Activated B cell treated with CpG ODN at 0.5 μM for 24 hours (primary cell): ENCODE measurements at regions of chr3 and their contacts with region 1.

Region 1: GRCh38 chr3:160565442-160566403 is at the start of gene KPNA4:
- DNase-seq: peak; percentile 95
- ATAC-seq: peak; percentile 88
- H3K4me3 Mint-ChIP-seq: peak within 1 kb of the TSS; percentile 95
- H3K27ac Mint-ChIP-seq: peak within 1 kb of the TSS; percentile 94
- H3K4me1 Mint-ChIP-seq: peaks cover 53% of the 10 kb centered on the region
- H3K27me3 Mint-ChIP-seq: no peaks in the 10 kb centered on the region
- CTCF ChIP-seq: no peak
- total RNA-seq, gene KPNA4: 43.4 and 46.7 TPM in 2 replicates

Region 2: DNA sequence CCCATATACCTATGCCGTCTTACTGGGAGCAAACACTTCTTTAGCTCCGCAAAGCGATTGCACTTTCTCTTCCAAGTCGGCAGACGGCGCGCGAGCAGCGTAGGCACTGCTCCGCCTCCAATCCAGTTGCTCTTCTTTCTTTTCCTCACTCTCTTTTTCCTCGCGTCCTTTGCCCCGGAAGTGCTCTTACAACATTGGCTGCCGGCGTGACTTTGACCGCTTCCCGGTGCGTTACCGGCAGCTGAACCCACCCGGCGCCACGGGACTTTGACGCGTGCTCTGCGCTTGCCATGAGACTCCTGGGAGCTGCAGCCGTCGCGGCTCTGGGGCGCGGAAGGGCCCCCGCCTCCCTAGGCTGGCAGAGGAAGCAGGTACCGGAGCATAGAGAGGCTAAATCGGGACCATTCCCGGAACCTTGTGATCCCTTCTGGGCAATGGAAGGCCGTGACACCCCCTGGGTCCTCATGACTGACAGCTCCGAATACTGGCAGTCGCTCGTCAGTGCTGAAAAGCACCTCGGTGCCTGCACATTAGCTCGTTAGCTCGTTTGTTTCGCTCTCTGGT is 1921.3 kb before region 1 on chr3 and contains the start of gene GFM1:
- CTCF ChIA-PET with region 1: no interaction called
- POLR2A ChIA-PET with region 1: no interaction called
- intact Hi-C with region 1: loop called (anchors 10 kb)
- DNase-seq: peak; percentile 75
- ATAC-seq: peak; percentile 96
- H3K4me3 Mint-ChIP-seq: peak within 1 kb of the TSS; percentile 99
- H3K27ac Mint-ChIP-seq: peak within 1 kb of the TSS; percentile 90
- H3K4me1 Mint-ChIP-seq: peaks cover 24% of the 10 kb centered on the region
- H3K27me3 Mint-ChIP-seq: no peaks in the 10 kb centered on the region
- CTCF ChIP-seq: peak; percentile 46
- total RNA-seq, gene GFM1: 46.8 and 56.4 TPM in 2 replicates

Region 3: GRCh38 chr3:160012108-160012507 is 553.6 kb before region 1 on chr3:
- CTCF ChIA-PET with region 1: no interaction called
- POLR2A ChIA-PET with region 1: no interaction called
- intact Hi-C with region 1: loop called (anchors 1 kb)
- DNase-seq: no peak
- ATAC-seq: peak; percentile 88
- H3K4me3 Mint-ChIP-seq: peak overlapping the region; percentile 25
- H3K27ac Mint-ChIP-seq: peak overlapping the region; percentile 83
- H3K4me1 Mint-ChIP-seq: peaks cover 42% of the 10 kb centered on the region
- H3K27me3 Mint-ChIP-seq: no peaks in the 10 kb centered on the region
- CTCF ChIP-seq: no peak

Region 4: DNA sequence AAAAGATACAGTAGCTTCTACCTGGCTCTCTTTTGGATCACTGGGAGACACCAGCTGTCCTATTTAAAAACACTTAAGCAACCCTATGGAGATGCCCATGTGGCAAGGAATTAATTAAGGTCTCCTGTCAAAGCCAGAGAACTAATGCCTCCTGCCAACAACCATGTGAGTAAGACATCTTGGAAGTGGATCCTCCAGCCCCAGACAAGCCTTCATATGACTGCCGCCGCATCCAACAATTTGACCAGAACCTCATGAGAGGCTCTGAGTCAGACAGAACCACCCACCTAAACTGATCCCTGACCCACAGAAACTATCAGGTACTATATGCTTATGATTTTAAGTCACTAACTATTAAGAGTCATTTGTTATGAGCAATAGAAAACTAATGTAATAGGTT is 189.0 kb before region 1 on chr3:
- CTCF ChIA-PET with region 1: no interaction called
- POLR2A ChIA-PET with region 1: no interaction called
- intact Hi-C with region 1: no loop called
- DNase-seq: no peak
- ATAC-seq: no peak
- H3K4me3 Mint-ChIP-seq: no peak overlapping the region
- H3K27ac Mint-ChIP-seq: no peak overlapping the region
- H3K4me1 Mint-ChIP-seq: no peaks in the 10 kb centered on the region
- H3K27me3 Mint-ChIP-seq: no peaks in the 10 kb centered on the region
- CTCF ChIP-seq: no peak

Region 5: DNA sequence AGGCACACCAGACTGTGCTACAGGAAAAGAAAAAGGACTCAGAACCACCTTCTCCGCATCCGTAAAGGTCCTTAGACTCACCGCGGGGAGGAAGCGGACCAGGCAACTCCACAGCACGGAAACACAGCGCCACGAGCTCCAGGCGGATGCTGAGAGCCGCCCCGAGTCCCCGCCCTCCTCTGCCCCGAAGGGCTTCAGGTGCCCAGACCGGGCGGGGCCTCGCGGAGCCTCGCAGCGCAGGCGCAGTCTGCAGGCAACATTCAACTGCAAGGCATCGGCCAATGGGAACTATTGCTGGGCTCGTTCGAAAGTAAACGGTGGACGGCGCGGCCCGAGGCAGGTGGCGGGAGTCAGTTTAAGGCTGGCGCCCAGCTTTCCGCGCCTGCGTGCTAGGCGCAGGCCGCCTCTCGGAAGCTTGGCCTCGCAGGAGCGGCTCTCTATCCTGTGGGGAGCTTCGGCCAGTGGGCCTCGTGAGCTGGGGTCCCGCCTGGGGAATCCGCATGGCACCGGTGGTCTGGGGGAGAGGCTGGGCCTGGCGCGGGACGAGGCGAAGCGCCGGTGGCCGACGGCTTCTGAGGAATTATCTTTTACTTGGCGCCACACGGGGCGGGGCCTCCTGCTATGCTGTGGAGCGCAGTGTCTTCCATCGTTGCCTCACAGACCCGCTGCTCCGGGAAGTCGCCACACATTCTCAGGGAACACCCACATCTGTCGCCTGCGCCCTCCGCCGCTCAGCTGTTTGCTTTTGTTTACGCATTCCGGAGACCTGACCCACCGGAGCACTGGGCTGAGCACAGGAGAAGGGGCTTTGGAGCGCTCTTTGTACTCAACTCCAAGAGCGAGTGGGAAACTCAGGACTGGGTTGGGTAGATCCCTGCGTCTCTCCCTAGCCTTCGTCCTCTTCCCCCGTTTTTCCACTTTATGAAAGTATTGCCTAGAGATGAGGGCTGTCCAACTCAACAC is 115.8 kb before region 1 on chr3 and contains the start of gene TRIM59:
- CTCF ChIA-PET with region 1: no interaction called
- POLR2A ChIA-PET with region 1: interaction called, 6 read pairs
- intact Hi-C with region 1: loop called (anchors 1 kb)
- DNase-seq: peak; percentile 92
- ATAC-seq: peak; percentile 96
- H3K4me3 Mint-ChIP-seq: peak within 1 kb of the TSS; percentile 94
- H3K27ac Mint-ChIP-seq: peak within 1 kb of the TSS; percentile 90
- H3K4me1 Mint-ChIP-seq: peaks cover 33% of the 10 kb centered on the region
- H3K27me3 Mint-ChIP-seq: no peaks in the 10 kb centered on the region
- CTCF ChIP-seq: no peak
- total RNA-seq, gene TRIM59: 23.4 TPM in 2 replicates

Region 6: DNA sequence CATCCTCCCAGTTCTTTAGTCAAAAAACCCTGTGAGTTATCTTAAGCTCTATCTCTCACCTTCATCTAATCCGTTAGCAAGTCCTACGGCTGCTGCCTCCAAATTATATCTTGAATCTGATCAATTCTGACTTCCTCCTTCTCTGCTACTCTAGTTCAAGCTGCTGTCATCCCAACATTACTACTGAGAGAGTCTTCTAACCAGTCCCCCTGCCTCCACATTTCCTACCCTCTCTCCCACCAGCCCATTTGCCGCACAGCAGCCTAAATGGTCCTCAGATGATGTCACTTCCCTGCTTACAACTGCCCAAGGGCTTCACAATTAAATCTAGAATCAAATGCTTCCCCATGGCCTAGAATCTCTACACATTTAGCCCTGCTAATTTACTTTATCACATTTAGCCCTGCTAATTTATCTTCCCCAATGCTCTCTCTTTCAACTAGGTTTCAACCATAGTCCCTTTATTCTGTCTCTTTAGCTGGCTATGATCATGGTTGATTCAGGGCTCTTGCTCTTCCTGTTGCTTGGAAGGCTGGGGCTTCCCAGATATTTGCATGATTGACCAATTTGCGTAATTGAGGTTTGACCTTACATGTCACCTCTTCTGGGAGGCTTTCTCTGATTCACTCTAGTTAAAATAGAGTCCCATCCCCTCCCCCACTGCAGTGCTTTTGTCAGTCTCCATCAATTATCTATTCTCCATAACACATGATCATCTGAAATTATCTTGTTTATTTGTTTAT is 100.2 kb after region 1 on chr3:
- CTCF ChIA-PET with region 1: no interaction called
- POLR2A ChIA-PET with region 1: interaction called, 7 read pairs
- intact Hi-C with region 1: loop called (anchors 2 kb)
- DNase-seq: no peak
- ATAC-seq: peak; percentile 79
- H3K4me3 Mint-ChIP-seq: peak overlapping the region; percentile 39
- H3K27ac Mint-ChIP-seq: peak overlapping the region; percentile 79
- H3K4me1 Mint-ChIP-seq: peaks cover 26% of the 10 kb centered on the region
- H3K27me3 Mint-ChIP-seq: no peaks in the 10 kb centered on the region
- CTCF ChIP-seq: no peak

Region 7: DNA sequence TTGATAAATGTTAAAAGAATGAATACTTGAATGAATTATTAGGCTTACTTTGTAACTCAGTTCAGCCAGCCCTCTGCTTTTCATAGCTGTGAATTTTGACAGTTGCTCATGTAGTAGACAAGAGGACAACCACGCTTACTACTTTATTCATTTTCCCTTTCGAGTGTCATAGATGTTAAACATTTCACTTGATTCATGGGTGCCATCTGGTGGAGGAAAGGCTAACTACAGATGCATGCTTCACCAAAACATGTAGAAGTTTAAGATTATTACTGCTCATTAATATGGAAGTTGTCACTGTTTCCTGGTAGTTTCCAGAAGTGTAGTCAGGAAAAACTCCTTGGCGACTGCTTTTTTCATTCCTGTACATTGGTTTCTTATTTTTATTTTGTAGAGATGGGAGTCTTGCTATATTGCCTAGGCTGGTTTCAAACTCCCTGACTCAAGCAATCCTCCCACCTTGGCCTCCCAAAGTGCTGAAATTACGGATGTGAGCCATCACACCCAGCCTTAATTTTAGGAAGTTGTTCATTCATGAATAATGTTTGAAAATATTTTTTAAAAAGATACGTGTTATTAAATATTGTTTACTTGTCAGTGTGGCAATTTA is 376.3 kb after region 1 on chr3:
- CTCF ChIA-PET with region 1: no interaction called
- POLR2A ChIA-PET with region 1: no interaction called
- intact Hi-C with region 1: loop called (anchors 10 kb)
- DNase-seq: no peak
- ATAC-seq: peak; percentile 87
- H3K4me3 Mint-ChIP-seq: no peak overlapping the region
- H3K27ac Mint-ChIP-seq: no peak overlapping the region
- H3K4me1 Mint-ChIP-seq: peaks cover 4% of the 10 kb centered on the region
- H3K27me3 Mint-ChIP-seq: no peaks in the 10 kb centered on the region
- CTCF ChIP-seq: no peak

Region 8: DNA sequence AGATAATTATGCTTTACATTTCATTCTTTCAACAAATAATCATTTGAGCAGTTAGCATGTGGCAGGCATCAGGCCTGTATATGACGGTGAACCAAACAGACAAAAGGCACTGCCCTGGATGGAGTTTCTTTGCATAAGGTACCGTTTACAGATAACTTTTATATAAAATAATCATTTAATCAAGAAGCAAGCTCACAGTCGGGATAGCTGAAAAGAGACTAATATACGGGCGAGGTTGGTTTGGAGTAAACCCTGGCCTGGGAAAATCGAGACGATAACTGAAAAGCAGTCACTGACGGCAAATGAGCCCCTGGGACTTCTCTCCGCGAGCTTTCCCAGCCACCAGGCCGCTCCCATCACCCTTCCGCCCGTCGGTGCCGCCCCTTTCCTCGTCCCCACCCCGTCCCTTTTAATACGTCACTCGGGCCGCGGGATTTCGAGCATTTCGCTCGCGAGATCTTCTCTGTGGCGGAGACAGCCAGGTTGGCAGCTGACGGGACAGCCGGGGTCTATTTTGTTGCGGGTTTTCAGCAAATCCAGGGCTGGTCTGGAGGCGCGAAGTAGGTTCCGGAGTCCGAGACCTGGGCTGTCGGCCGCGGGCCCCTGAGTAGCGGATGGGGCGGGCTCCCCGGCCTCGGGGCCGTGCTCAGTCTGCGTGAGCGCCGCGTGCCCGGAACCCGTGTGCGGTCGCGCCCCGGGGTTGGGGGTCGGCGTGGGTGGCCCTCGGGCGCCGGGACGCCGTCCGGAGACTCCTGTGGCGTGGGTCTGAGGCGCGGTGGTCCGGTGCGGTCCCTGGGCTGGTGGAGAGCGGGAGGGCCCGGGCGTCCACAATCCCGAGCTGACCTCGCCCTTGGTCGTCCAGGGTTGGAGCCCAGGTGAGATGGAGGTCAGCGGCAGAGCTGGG is 655.4 kb after region 1 on chr3 and contains the start of gene NMD3:
- CTCF ChIA-PET with region 1: no interaction called
- POLR2A ChIA-PET with region 1: no interaction called
- intact Hi-C with region 1: loop called (anchors 2 kb)
- DNase-seq: peak; percentile 87
- ATAC-seq: peak; percentile 95
- H3K4me3 Mint-ChIP-seq: peak within 1 kb of the TSS; percentile 91
- H3K27ac Mint-ChIP-seq: peak within 1 kb of the TSS; percentile 86
- H3K4me1 Mint-ChIP-seq: peaks cover 33% of the 10 kb centered on the region
- H3K27me3 Mint-ChIP-seq: peaks cover 6% of the 10 kb centered on the region
- CTCF ChIP-seq: no peak
- total RNA-seq, gene NMD3: 44.2 and 45.8 TPM in 2 replicates